CD4-positive, alpha-beta memory T cell (primary cell): ENCODE measurements at regions of chr11 and their contacts with region 1.

Region 1: DNA sequence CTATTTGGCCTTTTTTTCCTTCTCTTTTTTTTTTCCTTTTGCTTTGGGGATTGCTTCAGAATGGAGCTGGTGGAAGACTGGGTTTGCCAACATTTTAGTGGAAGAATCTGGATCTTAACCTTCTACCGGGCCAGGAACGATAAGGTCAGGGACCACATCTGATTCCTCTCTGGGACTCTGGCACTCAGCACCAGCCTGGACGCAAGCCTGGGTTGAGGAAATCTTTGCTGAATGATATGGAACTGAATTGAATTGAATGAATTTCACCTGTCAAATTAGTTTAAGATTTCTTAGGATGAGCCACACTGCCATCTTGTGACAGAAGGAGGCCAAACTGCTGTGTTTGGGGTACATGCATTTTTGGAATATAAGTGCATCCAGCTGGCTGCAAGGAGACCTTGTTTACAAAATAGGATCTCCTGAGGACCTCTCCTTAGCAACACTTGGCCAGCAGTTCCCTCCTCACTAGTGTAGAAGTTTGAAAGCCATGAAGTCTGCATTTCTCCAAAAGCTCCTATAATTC is 30.4 kb downstream of the TPBGL start:
- DNase-seq: peak in 4 of 5 donors; percentile 22 to 32 (median 31)
- H3K4me3 ChIP-seq: no peak overlapping the region
- H3K4me3 Mint-ChIP-seq: no peak overlapping the region
- H3K27ac ChIP-seq: no peak overlapping the region
- H3K27ac Mint-ChIP-seq: peak overlapping the region in 6 of 7 donors; percentile 48 to 92 (median 70)
- H3K4me1 ChIP-seq: peaks cover 42% of the 10 kb centered on the region
- H3K4me1 Mint-ChIP-seq: peaks cover 22 to 50% (median 33%) of the 10 kb centered on the region in 4 donors
- H3K27me3 ChIP-seq: no peaks in the 10 kb centered on the region
- H3K27me3 Mint-ChIP-seq: no peaks in the 10 kb centered on the region

Region 2: GRCh38 chr11:75174781-75175370 is 96.1 kb before region 1 on chr11:
- CTCF ChIA-PET with region 1: no interaction called
- POLR2A ChIA-PET with region 1: no interaction called
- intact Hi-C with region 1: no loop called
- DNase-seq: peak in 1 of 5 donors; percentile 4
- H3K4me3 ChIP-seq: no peak overlapping the region
- H3K4me3 Mint-ChIP-seq: peak overlapping the region in 2 of 8 donors; percentile 7 to 8
- H3K27ac ChIP-seq: no peak overlapping the region
- H3K27ac Mint-ChIP-seq: peak overlapping the region in 6 of 7 donors; percentile 37 to 87 (median 64)
- H3K4me1 ChIP-seq: peaks cover 13% of the 10 kb centered on the region
- H3K4me1 Mint-ChIP-seq: peaks cover 11 to 18% (median 13%) of the 10 kb centered on the region in 4 donors
- H3K27me3 ChIP-seq: no peaks in the 10 kb centered on the region
- H3K27me3 Mint-ChIP-seq: peaks cover 0 to 2% of the 10 kb centered on the region in 2 donors

Region 3: DNA sequence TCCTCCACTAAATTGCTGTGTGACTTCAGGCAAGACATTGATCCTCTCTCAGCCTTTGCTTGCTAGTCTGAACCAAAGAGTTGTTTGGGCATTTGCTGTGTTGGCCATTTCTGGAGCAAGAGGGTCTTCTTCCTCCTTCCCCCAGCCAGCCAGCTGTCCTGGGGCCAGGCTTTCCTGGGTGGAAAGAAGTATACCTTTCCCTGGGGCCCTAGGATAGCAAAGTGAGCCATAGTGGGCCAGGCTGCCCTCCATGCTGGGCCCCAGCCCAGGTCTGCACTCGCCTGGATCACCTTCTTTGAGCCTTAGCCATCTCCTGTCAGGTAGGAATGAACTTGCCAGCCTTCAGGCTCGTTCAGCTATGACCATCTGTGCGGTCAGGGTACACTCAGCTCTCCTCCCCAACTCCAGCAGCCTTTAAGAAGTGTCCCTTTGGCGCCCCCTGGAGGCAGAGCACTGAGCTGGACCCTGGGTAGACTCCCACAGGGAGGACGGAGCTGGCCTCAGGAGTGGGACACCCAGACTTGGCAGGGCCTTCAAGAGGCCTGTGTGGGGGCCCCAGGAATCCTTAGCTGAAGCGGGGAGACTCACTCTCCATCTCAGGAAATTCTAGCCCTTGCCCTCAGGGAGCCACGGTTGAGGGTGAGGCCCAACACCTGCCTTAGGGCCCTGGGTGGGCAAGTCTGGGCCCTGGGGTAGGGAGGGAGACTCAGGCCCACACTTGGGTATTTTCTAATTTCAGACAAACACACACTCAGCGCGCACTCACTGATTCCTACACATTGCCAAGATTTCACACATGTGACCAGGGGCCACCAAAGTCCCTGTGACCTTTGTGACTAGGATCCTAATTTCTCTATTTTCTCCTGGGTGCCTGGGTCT is 66.0 kb before region 1 on chr11:
- CTCF ChIA-PET with region 1: interaction called, 14 read pairs
- POLR2A ChIA-PET with region 1: no interaction called
- intact Hi-C with region 1: no loop called
- DNase-seq: peak; percentile 61 to 75 (median 68)
- H3K4me3 ChIP-seq: no peak overlapping the region
- H3K4me3 Mint-ChIP-seq: no peak overlapping the region
- H3K27ac ChIP-seq: no peak overlapping the region
- H3K27ac Mint-ChIP-seq: no peak overlapping the region
- H3K4me1 ChIP-seq: no peaks in the 10 kb centered on the region
- H3K4me1 Mint-ChIP-seq: no peaks in the 10 kb centered on the region
- H3K27me3 ChIP-seq: no peaks in the 10 kb centered on the region
- H3K27me3 Mint-ChIP-seq: peaks cover 3 to 7% of the 10 kb centered on the region in 2 donors

Region 4: DNA sequence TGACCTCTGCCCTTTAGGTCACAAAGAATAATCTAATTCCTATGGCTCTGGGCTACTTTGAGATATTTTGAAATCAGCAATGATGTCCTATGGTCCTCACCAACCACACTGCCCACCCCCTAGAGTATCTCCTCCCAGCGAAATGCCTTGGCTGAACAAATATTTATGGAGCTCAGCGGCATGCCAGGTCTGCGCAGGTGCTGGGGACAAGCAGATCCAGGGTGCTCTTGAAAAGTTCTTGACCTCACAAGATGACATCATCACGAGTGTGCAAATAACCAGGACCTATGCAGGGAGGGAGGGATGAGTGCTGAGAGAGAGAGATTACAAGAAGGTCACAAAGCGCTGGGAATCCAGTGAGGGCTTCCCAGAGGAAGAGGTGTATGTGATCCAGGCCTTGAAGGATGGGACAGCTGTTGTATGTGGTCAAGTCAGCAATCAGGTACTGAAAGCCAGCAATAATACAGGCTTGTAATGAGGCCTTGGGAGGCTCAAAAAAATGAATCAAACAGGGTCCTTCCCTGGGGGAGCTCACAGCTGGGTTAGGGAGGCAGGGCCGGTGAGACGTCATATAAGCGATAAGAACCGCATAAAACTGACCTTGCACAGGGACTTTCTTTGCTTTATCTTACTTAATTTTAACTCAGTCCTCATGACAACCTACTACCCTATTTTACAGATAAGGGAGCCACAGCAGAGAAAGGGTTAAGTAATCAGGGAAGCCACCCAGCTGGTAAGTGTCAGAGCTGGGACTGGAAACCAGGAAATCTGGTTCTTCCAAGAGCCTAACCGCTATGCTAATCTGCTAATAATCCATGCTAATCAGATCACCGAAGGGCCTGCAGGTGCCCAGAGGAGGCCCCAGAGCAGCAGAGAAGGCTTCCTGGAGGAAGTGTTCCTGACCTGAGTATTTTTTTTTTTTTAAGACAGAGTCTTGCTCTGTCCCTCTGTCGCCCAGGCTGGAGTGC is 72.2 kb after region 1 on chr11:
- CTCF ChIA-PET with region 1: interaction called, 5 read pairs
- POLR2A ChIA-PET with region 1: interaction called, 50 read pairs
- intact Hi-C with region 1: no loop called
- DNase-seq: no peak
- H3K4me3 ChIP-seq: no peak overlapping the region
- H3K4me3 Mint-ChIP-seq: peak overlapping the region in 2 of 8 donors; percentile 13 to 31
- H3K27ac ChIP-seq: no peak overlapping the region
- H3K27ac Mint-ChIP-seq: peak overlapping the region; percentile 63 to 93 (median 90)
- H3K4me1 ChIP-seq: peaks cover 98% of the 10 kb centered on the region
- H3K4me1 Mint-ChIP-seq: peaks cover 56 to 100% (median 81%) of the 10 kb centered on the region in 4 donors
- H3K27me3 ChIP-seq: no peaks in the 10 kb centered on the region
- H3K27me3 Mint-ChIP-seq: no peaks in the 10 kb centered on the region

Region 5: DNA sequence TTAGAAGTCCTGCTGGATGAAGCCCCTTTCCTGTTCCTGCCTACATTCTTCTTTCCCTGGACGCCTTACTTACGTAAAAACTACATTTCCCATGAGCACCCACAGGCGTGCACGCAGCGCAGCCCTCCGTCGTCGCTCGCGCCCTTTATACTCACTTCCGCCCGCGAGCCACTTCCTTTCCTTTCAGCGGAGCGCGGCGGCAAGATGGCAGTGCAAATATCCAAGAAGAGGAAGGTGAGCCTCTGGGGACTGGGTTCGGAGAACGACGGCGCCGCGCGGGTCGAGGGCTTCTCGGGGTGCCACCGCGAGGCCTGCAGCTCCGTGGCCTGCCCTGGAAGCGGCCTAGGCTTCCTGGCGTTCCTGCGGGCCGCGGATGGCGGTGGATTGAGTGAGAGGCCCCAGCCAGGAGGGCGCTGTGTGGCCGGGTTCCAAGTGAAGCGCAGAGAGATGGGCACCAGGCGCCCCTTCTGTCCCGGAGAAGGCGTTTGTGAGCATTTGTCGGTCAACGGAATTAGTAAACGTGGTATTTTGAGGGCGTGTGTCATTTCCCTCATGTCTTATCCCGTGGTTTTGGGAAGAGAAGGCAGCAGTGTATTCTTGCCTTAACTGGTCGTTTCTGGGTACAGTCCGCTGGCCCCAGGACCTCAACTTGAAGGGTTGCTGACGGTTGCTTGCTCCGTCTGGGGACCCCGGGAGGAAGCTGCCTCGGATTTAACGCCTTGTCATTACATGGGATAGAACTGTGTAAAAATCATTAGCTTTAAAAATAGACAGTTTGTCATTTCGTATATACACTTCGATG is 128.6 kb after region 1 on chr11 and contains the start of gene RPS3:
- CTCF ChIA-PET with region 1: interaction called, 4 read pairs
- POLR2A ChIA-PET with region 1: interaction called, 34 read pairs
- intact Hi-C with region 1: no loop called
- DNase-seq: peak; percentile 87 to 89 (median 88)
- H3K4me3 ChIP-seq: peak within 1 kb of the TSS; percentile 71 to 93
- H3K4me3 Mint-ChIP-seq: peak within 1 kb of the TSS; percentile 88 to 98 (median 96)
- H3K27ac ChIP-seq: peak within 1 kb of the TSS; percentile 83
- H3K27ac Mint-ChIP-seq: peak within 1 kb of the TSS; percentile 96 to 99 (median 98)
- H3K4me1 ChIP-seq: peaks cover 38% of the 10 kb centered on the region
- H3K4me1 Mint-ChIP-seq: peaks cover 31 to 55% (median 40%) of the 10 kb centered on the region in 4 donors
- H3K27me3 ChIP-seq: no peaks in the 10 kb centered on the region
- H3K27me3 Mint-ChIP-seq: peaks cover 0 to 1% of the 10 kb centered on the region in 2 donors
- total RNA-seq, gene RPS3: 4,846 to 5,053 TPM

Region 6: DNA sequence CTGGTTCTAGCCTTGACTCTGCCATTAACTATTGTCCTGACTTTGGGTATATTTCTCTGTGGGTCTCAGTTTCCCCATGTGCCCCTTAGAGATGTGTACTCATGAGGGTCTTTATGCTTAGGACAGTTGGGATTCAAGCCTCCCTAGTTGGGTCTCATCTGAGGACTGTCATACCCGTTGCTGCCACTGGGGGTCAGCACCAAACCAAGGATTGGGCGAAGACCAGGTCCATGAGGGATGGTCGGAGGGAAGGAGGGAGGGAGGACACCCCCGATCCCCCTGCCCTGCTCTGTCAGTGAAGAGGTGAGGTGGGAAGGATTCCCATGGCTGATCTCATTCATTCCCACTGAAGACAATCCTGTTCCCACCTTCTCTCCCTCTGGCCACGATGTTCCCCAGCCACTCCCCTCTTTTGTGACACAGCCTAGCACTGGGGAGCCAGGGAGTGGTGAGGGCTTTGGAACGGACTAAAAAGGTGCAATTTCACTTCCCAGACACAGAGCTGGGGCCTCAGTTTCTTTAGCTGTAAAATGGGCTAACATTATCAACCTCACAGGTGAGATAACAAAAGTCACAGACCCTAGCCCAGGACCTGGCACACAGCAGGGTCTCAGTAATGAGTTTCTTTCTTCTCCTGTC is 174.5 kb after region 1 on chr11:
- CTCF ChIA-PET with region 1: interaction called, 10 read pairs
- POLR2A ChIA-PET with region 1: no interaction called
- intact Hi-C with region 1: no loop called
- DNase-seq: peak; percentile 54 to 72 (median 63)
- H3K4me3 ChIP-seq: no peak overlapping the region
- H3K4me3 Mint-ChIP-seq: no peak overlapping the region
- H3K27ac ChIP-seq: no peak overlapping the region
- H3K27ac Mint-ChIP-seq: peak overlapping the region in 3 of 7 donors; percentile 29 to 45 (median 29)
- H3K4me1 ChIP-seq: peaks cover 5% of the 10 kb centered on the region
- H3K4me1 Mint-ChIP-seq: peaks cover 0 to 7% (median 3%) of the 10 kb centered on the region in 4 donors
- H3K27me3 ChIP-seq: no peaks in the 10 kb centered on the region
- H3K27me3 Mint-ChIP-seq: no peaks in the 10 kb centered on the region

Region 7: GRCh38 chr11:75562048-75562835 is 291.3 kb after region 1 on chr11 and contains the start of gene SERPINH1:
- CTCF ChIA-PET with region 1: no interaction called
- POLR2A ChIA-PET with region 1: interaction called, 15 read pairs
- intact Hi-C with region 1: no loop called
- DNase-seq: peak; percentile 43 to 67 (median 49)
- H3K4me3 ChIP-seq: peak within 1 kb of the TSS; percentile 86 to 96
- H3K4me3 Mint-ChIP-seq: peak within 1 kb of the TSS; percentile 93 to 99 (median 99)
- H3K27ac ChIP-seq: peak within 1 kb of the TSS; percentile 71
- H3K27ac Mint-ChIP-seq: peak within 1 kb of the TSS; percentile 91 to 98 (median 96)
- H3K4me1 ChIP-seq: peaks cover 20% of the 10 kb centered on the region
- H3K4me1 Mint-ChIP-seq: peaks cover 12 to 49% (median 33%) of the 10 kb centered on the region in 4 donors
- H3K27me3 ChIP-seq: no peaks in the 10 kb centered on the region
- H3K27me3 Mint-ChIP-seq: no peaks in the 10 kb centered on the region
- total RNA-seq, gene SERPINH1: 15.6 to 16.2 TPM